ENCODE measurements at regions of chr6 and their contacts with region 1.

Region 1: GRCh38 chr6:106608062-106608668 is 21.1 kb downstream of the RTN4IP1 start:
- DNase-seq: peak; percentile 26
- ATAC-seq: peak; percentile 72
- H3K4me3 Mint-ChIP-seq: no peak overlapping the region
- H3K27ac Mint-ChIP-seq: no peak overlapping the region
- H3K4me1 Mint-ChIP-seq: peaks cover 9% of the 10 kb centered on the region
- H3K27me3 Mint-ChIP-seq: no peaks in the 10 kb centered on the region
- CTCF ChIP-seq: peak; percentile 87

Region 2: GRCh38 chr6:106620931-106621672 is 12.9 kb after region 1 on chr6:
- CTCF ChIA-PET with region 1: interaction called, 39 read pairs
- POLR2A ChIA-PET with region 1: no interaction called
- intact Hi-C with region 1: no loop called
- DNase-seq: no peak
- ATAC-seq: no peak
- H3K4me3 Mint-ChIP-seq: no peak overlapping the region
- H3K27ac Mint-ChIP-seq: no peak overlapping the region
- H3K4me1 Mint-ChIP-seq: peaks cover 3% of the 10 kb centered on the region
- H3K27me3 Mint-ChIP-seq: no peaks in the 10 kb centered on the region
- CTCF ChIP-seq: no peak

Region 3: GRCh38 chr6:106979427-106979884 is 371.3 kb after region 1 on chr6:
- CTCF ChIA-PET with region 1: interaction called, 7 read pairs
- POLR2A ChIA-PET with region 1: no interaction called
- intact Hi-C with region 1: loop called (anchors 5 kb)
- DNase-seq: peak; percentile 89
- ATAC-seq: peak; percentile 71
- H3K4me3 Mint-ChIP-seq: no peak overlapping the region
- H3K27ac Mint-ChIP-seq: no peak overlapping the region
- H3K4me1 Mint-ChIP-seq: no peaks in the 10 kb centered on the region
- H3K27me3 Mint-ChIP-seq: peaks cover 29% of the 10 kb centered on the region
- CTCF ChIP-seq: peak; percentile 96

Measured in activated CD8-positive, alpha-beta T cell treated with anti-CD3 and anti-CD28 coated beads for 36 hours (primary cell).